ENCODE measurements at regions of chr6 and their contacts with region 1.

Region 1: GRCh38 chr6:109362102-109362884 is 20.0 kb downstream of the CD164 start:
- DNase-seq: no peak
- ATAC-seq: peak; percentile 38; the same call in 2 of the 3 replicates
- H3K4me3 ChIP-seq: no peak overlapping the region
- H3K27ac ChIP-seq: no peak overlapping the region
- H3K4me1 ChIP-seq: no peaks in the 10 kb centered on the region
- H3K27me3 ChIP-seq: no peaks in the 10 kb centered on the region
- CTCF ChIP-seq: no peak
- EP300 ChIP-seq: no peak
- POLR2A ChIP-seq: no peak
- RAD21 ChIP-seq: no peak

Region 2: DNA sequence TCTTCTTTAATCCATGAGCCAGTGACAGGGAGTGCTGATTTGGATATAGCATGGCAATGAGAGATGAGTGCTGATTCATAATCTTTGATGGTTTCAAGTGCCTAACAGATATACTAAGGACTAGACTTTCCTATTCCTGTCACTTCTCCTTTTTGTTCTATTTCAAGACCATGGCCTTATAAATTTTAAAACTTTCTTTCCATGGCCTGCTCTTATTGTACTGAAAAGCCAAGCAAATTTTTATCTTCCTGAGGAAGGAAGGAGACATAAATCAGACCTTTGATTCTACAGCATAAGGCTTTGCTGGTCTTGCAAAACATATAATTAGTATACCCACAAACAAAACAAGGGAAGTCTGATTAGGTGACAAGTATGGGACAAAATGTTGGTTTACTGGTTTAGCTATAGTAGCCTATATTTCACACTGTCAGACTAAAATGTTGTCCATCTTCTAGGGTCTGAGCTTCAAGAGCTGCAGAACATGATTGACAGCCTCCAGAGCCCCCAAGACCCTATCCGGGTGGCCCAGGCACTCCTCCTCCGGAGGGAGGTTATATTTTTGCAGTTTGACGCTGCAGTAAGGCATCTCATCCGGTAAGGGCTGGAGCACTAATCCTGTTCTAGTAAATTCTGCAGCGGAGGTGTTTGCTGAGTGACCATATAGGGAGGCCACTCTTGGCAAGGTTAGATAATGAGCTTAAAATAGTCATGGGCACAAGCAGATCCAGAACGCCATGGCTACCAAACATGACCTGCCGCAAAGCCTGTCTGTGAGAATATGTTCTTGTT is 62.3 kb before region 1 on chr6:
- CTCF ChIA-PET with region 1: no interaction called
- POLR2A ChIA-PET with region 1: no interaction called
- in situ Hi-C with region 1: no loop called
- intact Hi-C with region 1: loop called (anchors 5 kb)
- DNase-seq: no peak
- ATAC-seq: no peak
- H3K4me3 ChIP-seq: no peak overlapping the region
- H3K27ac ChIP-seq: no peak overlapping the region
- H3K4me1 ChIP-seq: peaks cover 32% of the 10 kb centered on the region
- H3K27me3 ChIP-seq: no peaks in the 10 kb centered on the region; a peak in 1 of 5 replicates
- CTCF ChIP-seq: no peak
- EP300 ChIP-seq: no peak
- POLR2A ChIP-seq: no peak
- RAD21 ChIP-seq: no peak

Measured in HepG2 (cell line).